ENCODE measurements at regions of chr10 and their contacts with region 1.

Region 1: DNA sequence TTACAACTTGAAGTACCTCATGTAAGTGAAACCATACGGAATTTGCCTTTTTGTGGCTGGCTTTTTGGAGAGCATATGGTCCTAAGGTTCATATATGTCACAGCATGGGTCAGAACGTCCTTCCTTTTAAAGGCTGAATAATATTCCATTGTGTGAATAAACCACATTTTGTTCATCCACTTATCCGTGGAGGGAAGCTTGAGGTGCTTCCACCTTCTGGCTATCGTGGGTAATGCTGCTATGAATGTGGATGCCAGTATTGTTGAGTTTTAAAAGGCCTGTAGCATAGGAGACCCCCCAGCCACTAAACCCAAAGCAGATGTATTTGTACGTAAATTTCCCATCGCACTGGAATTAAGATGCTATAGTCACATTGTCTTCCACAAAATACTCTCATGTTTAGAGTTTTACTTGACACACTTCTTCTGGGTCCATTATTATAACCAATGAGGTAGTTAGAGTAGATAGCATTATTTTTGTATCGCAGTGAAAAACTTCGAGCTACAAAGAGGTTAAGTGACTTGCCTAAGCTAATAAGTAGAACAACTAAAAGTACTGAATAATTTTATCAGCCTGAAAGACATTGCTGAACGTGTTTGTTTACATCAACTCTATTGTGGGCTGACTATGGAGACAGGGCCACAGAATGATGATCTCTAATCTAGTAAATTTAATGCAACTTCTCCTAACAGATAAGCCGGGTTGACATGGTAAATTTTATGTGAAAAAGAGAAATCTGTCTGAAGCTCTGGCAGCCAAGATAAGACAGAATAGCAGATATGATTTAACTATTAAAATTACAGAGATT is 183.0 kb upstream of the CTBP2 start:
- DNase-seq: no peak
- CTCF ChIP-seq: peak; percentile 50

Region 2: DNA sequence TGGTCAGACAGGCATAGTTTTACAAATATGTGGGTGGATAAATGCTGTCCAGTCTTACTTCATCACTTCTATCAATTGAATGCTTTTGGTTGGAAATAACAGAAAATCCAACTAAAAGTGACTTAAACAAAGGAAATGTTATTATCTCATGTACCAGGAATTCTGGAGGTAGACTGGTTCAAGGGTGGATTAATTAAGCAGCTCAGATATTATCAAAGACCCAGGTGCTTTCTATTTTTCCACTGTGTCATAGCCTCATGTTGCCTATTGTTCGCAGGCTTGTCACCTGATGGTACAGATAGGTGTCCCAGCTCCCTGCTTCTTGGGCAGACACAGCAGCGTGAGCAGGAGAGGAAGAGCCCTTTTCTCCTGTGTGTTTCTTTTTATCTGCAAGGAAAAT is 26.9 kb before region 1 on chr10:
- CTCF ChIA-PET with region 1: no interaction called
- POLR2A ChIA-PET with region 1: no interaction called
- DNase-seq: no peak
- CTCF ChIP-seq: no peak

Region 3: GRCh38 chr10:125333209-125333591 is 10.1 kb before region 1 on chr10:
- CTCF ChIA-PET with region 1: interaction called, 16 read pairs
- POLR2A ChIA-PET with region 1: no interaction called
- DNase-seq: no peak
- CTCF ChIP-seq: no peak

Region 4: GRCh38 chr10:125441151-125441550 is 97.8 kb after region 1 on chr10:
- CTCF ChIA-PET with region 1: no interaction called
- POLR2A ChIA-PET with region 1: no interaction called
- DNase-seq: no peak
- CTCF ChIP-seq: no peak

Region 5: GRCh38 chr10:125868372-125868975 is 525.2 kb after region 1 on chr10:
- CTCF ChIA-PET with region 1: no interaction called
- POLR2A ChIA-PET with region 1: no interaction called
- DNase-seq: peak; percentile 32
- CTCF ChIP-seq: peak; percentile 83

Measured in GM10248 (cell line).